Heart right ventricle (tissue), 16 donors: ENCODE measurements at regions of chr13 and their contacts with region 1.

Region 1: GRCh38 chr13:50123862-50124536 is 108.8 kb downstream of the KCNRG start:
- DNase-seq: peak; percentile 87 to 97
- ATAC-seq: peak; percentile 86 to 95 (median 92)
- H3K4me3 ChIP-seq: peak overlapping the region; percentile 51 to 98 (median 94)
- H3K27ac ChIP-seq: peak overlapping the region; percentile 94 to 100 (median 100)
- H3K4me1 ChIP-seq: peaks cover 2 to 70% (median 53%) of the 10 kb centered on the region in 9 donors
- H3K27me3 ChIP-seq: peaks cover 0 to 14% (median 5%) of the 10 kb centered on the region in 7 donors
- CTCF ChIP-seq: peak in 2 of 9 donors; percentile 23 to 43

Region 2: DNA sequence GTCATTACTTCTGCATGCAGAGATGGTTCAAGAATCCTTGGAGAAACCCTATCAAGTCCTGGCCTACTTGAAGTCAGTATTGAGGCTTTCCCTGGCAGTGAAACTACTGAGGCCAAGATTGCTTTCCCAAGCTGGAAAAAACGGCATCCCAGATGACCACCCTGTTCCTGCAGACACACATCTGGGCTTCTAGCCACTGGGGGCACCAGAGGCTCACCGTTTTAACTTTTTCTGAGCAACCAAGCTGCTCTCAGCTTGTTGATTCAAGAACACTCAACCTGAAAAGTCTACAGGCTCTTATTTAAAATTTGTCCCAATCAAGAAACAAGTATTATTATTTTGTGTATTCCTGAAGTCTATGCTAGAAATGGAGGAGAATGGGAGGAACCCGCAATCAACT is 254.5 kb before region 1 on chr13:
- intact Hi-C with region 1: no loop called
- DNase-seq: no peak
- ATAC-seq: no peak
- H3K4me3 ChIP-seq: no peak overlapping the region
- H3K27ac ChIP-seq: no peak overlapping the region
- H3K4me1 ChIP-seq: no peaks in the 10 kb centered on the region
- H3K27me3 ChIP-seq: no peaks in the 10 kb centered on the region
- CTCF ChIP-seq: peak in 5 of 9 donors; percentile 8 to 32 (median 21)

Region 3: GRCh38 chr13:50200988-50201387 is 77.0 kb after region 1 on chr13:
- intact Hi-C with region 1: loop called in 1 of 10 experiments (anchors 5 kb)
- DNase-seq: no peak
- ATAC-seq: peak in 3 of 8 donors; percentile 17 to 53 (median 42)
- H3K4me3 ChIP-seq: no peak overlapping the region
- H3K27ac ChIP-seq: peak overlapping the region in 3 of 10 donors; percentile 3 to 41 (median 3)
- H3K4me1 ChIP-seq: peaks cover 2 to 29% (median 14%) of the 10 kb centered on the region in 9 donors
- H3K27me3 ChIP-seq: no peaks in the 10 kb centered on the region
- CTCF ChIP-seq: no peak

Region 4: DNA sequence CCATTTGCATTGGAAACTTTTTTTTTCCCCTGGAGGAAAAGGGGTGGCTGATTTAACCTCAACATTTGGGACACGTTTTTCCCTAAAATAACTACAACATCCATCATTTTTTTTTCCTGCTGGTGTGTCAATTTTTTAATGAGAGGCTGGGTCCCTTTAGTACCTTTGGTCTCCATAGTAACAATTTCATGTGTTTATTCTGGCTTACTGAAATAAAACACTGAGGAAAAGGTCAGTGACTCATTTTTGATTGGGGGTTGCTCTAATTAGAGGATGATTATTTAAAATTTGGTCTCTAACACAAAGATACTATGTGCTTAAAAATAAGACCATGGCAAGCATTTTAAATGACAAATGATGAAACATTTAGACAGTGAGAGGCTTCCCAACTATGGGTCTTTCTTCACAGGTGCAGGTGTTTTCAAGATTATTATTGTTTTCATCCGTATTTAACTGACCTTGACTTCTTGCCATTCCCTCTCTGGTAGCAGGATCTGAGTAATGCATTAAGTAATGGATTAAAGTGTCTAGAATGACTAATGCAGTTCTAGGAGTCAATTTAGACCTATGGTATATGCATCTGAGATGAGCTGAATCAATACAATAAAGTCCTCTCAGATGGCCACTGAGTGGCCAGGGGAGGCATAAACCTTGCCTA is 297.6 kb after region 1 on chr13:
- intact Hi-C with region 1: no loop called
- DNase-seq: no peak
- ATAC-seq: peak in 3 of 8 donors; percentile 26 to 36 (median 28)
- H3K4me3 ChIP-seq: no peak overlapping the region
- H3K27ac ChIP-seq: peak overlapping the region in 9 of 10 donors; percentile 47 to 78 (median 69)
- H3K4me1 ChIP-seq: peaks cover 3 to 68% (median 58%) of the 10 kb centered on the region in 9 donors
- H3K27me3 ChIP-seq: no peaks in the 10 kb centered on the region
- CTCF ChIP-seq: no peak

Region 5: DNA sequence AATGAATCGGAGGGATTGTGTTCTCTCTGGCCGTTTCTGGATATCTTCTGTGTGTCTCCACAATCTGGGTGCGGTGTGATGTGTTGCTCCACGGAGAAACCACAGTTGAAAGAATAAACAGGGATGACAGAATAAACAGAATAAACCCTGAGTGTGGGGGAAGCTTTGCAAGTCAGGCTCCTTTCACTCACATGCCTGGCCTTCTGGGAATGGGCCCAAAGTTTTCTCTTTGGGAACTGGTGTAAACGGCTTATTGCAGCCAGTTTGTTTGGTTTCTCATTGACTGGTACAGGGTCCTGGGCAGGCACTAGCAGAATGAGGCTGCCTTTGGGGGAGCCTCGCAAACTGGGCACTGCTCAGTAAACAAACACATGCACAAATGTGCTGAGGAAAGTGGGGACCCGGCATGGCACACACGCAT is 394.8 kb after region 1 on chr13:
- intact Hi-C with region 1: loop called in 1 of 10 experiments (anchors 5 kb)
- DNase-seq: no peak
- ATAC-seq: peak in 1 of 8 donors; percentile 27
- H3K4me3 ChIP-seq: no peak overlapping the region
- H3K27ac ChIP-seq: peak overlapping the region in 1 of 10 donors; percentile 18
- H3K4me1 ChIP-seq: peaks cover 0 to 70% (median 25%) of the 10 kb centered on the region in 9 donors
- H3K27me3 ChIP-seq: no peaks in the 10 kb centered on the region
- CTCF ChIP-seq: no peak